Right cardiac atrium (tissue), 5 donors: ENCODE measurements at regions of chr11 and their contacts with region 1.

Region 1: GRCh38 chr11:12281571-12282478 is 95.5 kb upstream of the PARVA start:
- DNase-seq: peak; percentile 80 to 93 (median 90)
- ATAC-seq: peak; percentile 63 to 65
- H3K4me3 ChIP-seq: no peak overlapping the region
- H3K27ac ChIP-seq: no peak overlapping the region
- H3K4me1 ChIP-seq: peaks cover 2% of the 10 kb centered on the region
- H3K27me3 ChIP-seq: no peaks in the 10 kb centered on the region

Region 2: GRCh38 chr11:11798586-11799438 is 483.0 kb before region 1 on chr11:
- intact Hi-C with region 1: loop called in 2 of 4 experiments (anchors 5 to 10 kb)
- DNase-seq: peak; percentile 85 to 95 (median 91)
- ATAC-seq: peak; percentile 91 to 92
- H3K4me3 ChIP-seq: no peak overlapping the region
- H3K27ac ChIP-seq: no peak overlapping the region
- H3K4me1 ChIP-seq: no peaks in the 10 kb centered on the region
- H3K27me3 ChIP-seq: no peaks in the 10 kb centered on the region

Region 3: DNA sequence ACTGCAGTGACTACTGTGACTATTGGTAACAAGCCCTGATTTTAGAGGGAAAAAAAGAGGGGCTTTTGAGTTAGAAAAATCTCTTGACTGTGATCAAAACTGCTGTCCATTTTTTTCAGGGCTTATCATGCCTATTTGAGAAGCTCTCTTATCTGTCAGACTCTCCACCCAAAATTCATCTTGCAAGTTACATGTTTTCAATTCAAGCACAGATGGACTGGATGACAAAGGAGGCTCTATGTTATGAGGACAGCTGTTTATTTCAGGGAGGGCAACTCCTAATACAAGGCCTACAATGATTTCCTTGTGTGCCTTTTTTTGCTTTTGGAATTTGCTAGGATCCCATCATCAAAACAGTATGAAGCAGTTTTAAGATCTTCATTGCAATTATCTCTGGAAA is 475.2 kb before region 1 on chr11:
- intact Hi-C with region 1: loop called in 2 of 4 experiments (anchors 5 to 10 kb)
- DNase-seq: no peak
- ATAC-seq: peak; percentile 40 to 54
- H3K4me3 ChIP-seq: no peak overlapping the region
- H3K27ac ChIP-seq: no peak overlapping the region
- H3K4me1 ChIP-seq: no peaks in the 10 kb centered on the region
- H3K27me3 ChIP-seq: no peaks in the 10 kb centered on the region

Region 4: GRCh38 chr11:11923828-11924227 is 358.0 kb before region 1 on chr11:
- intact Hi-C with region 1: loop called in 1 of 4 experiments (anchors 10 kb)
- DNase-seq: no peak
- ATAC-seq: no peak
- H3K4me3 ChIP-seq: no peak overlapping the region
- H3K27ac ChIP-seq: no peak overlapping the region
- H3K4me1 ChIP-seq: no peaks in the 10 kb centered on the region
- H3K27me3 ChIP-seq: no peaks in the 10 kb centered on the region

Region 5: DNA sequence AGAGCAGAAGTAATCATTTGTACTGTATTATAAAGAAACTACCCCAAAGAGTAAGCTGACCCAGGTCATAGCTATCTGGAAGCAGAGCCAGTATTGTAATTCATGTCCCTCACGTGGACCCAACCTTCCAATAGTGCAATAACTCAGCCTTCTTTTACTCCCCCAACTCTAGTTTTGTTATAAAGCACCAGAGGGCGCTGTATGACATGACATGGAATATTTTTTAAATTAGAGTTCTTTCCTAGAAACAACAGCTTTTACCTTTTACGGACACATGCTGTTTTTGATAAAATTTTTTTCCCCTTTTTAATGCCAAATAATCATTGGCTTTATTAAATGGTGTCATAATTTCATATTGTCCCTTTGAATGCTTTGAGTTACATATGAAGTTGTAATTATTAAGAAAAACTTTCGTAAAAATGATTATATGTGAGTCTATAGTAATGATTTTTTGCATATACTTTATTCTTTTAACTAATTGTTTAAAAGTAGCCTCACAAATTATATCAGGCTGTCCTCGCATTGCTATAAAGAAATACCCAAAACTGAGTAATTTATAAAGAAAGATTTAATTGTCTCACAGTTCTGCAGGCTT is 350.3 kb before region 1 on chr11:
- intact Hi-C with region 1: loop called in 2 of 4 experiments (anchors 10 kb)
- DNase-seq: no peak
- ATAC-seq: peak; percentile 68 to 73
- H3K4me3 ChIP-seq: no peak overlapping the region
- H3K27ac ChIP-seq: no peak overlapping the region
- H3K4me1 ChIP-seq: no peaks in the 10 kb centered on the region
- H3K27me3 ChIP-seq: no peaks in the 10 kb centered on the region

Region 6: GRCh38 chr11:12043959-12044819 is 237.6 kb before region 1 on chr11:
- intact Hi-C with region 1: loop called (anchors 1 to 5 kb)
- DNase-seq: peak; percentile 91 to 93 (median 92)
- ATAC-seq: peak; percentile 88
- H3K4me3 ChIP-seq: no peak overlapping the region
- H3K27ac ChIP-seq: peak overlapping the region; percentile 74
- H3K4me1 ChIP-seq: no peaks in the 10 kb centered on the region
- H3K27me3 ChIP-seq: no peaks in the 10 kb centered on the region

Region 7: DNA sequence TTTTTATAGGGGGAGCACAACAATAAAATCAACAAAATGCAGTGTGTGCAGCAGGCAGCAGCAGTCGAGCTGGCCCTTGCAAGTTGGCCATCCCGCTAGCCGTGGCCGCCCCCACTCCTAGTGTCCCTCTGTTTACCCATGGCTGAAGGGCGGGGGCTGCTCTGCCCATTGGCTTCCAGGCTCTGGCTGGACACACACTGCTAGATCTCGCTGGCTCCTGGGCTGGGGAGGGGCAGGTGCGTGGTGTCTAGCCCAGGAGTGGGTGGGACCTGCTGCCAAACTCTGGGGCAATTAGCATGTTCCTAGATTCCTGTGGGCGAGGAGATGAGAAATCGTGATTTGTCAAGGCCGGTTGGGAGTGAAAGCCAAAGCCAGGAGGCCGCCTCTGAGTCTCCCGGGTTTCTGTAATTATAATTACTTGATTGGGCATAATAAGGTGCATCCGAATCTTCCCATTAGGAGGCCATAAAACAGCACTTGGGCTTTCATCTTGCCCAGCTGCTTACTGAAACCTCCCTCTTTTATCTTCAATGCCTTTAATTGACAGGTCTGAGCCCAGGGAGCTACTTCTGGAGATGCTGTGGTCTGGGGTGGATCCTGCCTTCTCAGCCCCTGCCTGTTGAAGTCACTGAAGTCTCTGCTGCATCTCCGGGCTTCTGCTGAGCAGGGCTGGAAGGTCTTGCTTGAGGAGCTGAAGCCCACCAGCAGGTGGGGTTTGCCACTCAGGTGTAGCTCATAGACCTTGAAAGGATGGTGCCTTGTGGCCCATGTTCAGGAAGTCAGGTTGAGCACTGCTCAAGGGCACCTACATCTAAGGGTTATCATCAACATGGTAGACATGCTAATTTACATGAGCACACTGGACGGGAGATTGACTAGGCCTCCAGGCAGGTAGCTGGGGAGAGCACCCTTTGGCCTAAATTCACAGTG is 228.9 kb before region 1 on chr11:
- intact Hi-C with region 1: loop called in 2 of 4 experiments (anchors 2 to 5 kb)
- DNase-seq: no peak
- ATAC-seq: no peak
- H3K4me3 ChIP-seq: no peak overlapping the region
- H3K27ac ChIP-seq: no peak overlapping the region
- H3K4me1 ChIP-seq: peaks cover 5% of the 10 kb centered on the region
- H3K27me3 ChIP-seq: no peaks in the 10 kb centered on the region

Region 8: GRCh38 chr11:12224537-12224893 is 57.3 kb before region 1 on chr11:
- intact Hi-C with region 1: no loop called
- DNase-seq: peak; percentile 77 to 91 (median 90)
- ATAC-seq: peak; percentile 8 to 43
- H3K4me3 ChIP-seq: no peak overlapping the region
- H3K27ac ChIP-seq: peak overlapping the region; percentile 65
- H3K4me1 ChIP-seq: peaks cover 18% of the 10 kb centered on the region
- H3K27me3 ChIP-seq: no peaks in the 10 kb centered on the region